GM10248 (cell line): ENCODE measurements at regions of chr12 and their contacts with region 1.

Region 1: GRCh38 chr12:26028953-26029735 is 70.7 kb downstream of the RASSF8 start:
- DNase-seq: peak; percentile 46
- CTCF ChIP-seq: peak; percentile 59

Region 2: GRCh38 chr12:25436203-25437030 is 592.7 kb before region 1 on chr12:
- CTCF ChIA-PET with region 1: interaction called, 18 read pairs
- POLR2A ChIA-PET with region 1: no interaction called
- DNase-seq: peak; percentile 61
- CTCF ChIP-seq: peak; percentile 86

Region 3: DNA sequence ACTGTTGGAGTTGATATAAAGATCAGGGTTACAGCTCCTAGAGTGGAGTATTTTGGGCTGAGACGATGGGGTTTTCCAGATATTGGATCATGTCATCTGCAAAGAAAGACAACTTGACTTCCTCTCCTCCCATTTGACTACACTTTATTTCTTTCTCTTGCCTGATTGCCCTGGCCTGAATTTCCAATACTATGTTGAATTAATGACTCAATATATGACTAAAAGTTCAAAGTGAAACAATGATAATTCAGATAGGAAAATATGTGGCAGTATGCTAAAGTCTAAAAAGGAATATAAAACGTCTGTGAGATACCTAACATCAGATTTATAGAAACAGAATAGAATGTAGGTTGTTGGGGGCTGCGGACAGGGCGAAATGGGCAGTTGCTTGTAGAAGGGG is 23.5 kb after region 1 on chr12:
- CTCF ChIA-PET with region 1: no interaction called
- POLR2A ChIA-PET with region 1: no interaction called
- DNase-seq: no peak
- CTCF ChIP-seq: no peak

Region 4: DNA sequence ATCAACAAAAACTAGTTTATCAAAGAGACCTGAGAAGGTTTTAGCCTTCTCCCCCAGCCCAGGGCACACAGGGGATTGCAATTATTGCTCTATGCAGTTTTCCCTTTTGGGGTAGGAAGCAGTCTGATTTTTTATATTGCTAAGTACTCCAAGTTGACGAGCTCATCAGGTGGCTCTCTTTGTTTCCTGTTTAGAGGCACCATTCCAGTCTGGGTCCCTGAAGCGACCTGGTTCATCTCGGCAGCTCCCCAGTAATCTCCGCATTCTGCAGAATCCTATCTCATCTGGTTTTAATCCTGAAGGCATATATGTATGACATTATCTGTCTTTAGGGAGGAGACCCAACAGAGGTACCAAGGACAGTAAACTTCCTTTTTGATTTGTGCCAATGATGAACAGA is 39.4 kb after region 1 on chr12:
- CTCF ChIA-PET with region 1: no interaction called
- POLR2A ChIA-PET with region 1: no interaction called
- DNase-seq: no peak
- CTCF ChIP-seq: no peak

Region 5: GRCh38 chr12:26177283-26177682 is 148.1 kb after region 1 on chr12:
- CTCF ChIA-PET with region 1: no interaction called
- POLR2A ChIA-PET with region 1: no interaction called
- DNase-seq: peak; percentile 27
- CTCF ChIP-seq: no peak

Region 6: DNA sequence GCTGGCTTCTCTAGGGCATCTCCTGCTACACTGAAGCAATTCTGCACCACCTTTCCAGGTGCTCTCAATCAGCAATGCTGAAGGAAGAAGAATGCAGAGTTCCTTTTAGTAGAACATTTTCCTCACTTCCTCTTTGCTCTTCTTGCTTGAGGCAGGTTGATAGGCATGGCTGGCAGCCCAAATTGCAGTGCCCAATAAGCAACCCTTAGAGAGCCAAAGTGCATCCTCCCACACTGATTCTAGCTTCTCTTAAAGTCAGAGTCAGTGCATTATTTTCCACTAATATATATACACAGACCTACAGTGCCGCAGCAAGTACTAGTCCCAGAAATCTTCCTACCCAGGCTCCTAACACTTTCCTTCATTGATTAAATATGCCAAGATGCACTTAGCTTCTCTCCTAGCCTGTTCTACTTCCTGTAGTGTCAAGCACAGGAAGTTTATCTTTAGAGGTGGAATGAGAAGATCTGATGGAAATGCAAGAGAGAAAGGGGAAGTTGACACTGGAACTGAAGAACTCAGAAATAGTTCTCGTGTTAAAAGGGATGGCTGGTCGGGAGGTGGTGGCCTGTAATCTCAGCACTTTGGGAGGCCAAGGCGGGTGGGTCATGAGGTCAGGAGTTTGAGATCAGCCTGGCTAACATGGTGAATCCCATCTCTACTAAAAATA is 299.0 kb after region 1 on chr12:
- CTCF ChIA-PET with region 1: no interaction called
- POLR2A ChIA-PET with region 1: no interaction called
- DNase-seq: no peak
- CTCF ChIP-seq: no peak